Activated CD4-positive, alpha-beta T cell treated with anti-CD3 and anti-CD28 coated beads, Interleukin-2, amount 10 ng/mL, durations not matched to agents 24 days and 14 days (primary cell): ENCODE measurements at regions of chr5 and their contacts with region 1.

Region 1: GRCh38 chr5:7856855-7857254 is 5.9 kb upstream of the CFAP90 start:
- DNase-seq: peak; percentile 83
- H3K4me3 Mint-ChIP-seq: no peak overlapping the region
- H3K27ac Mint-ChIP-seq: peak overlapping the region; percentile 50
- H3K4me1 Mint-ChIP-seq: peaks cover 30% of the 10 kb centered on the region
- H3K27me3 Mint-ChIP-seq: peaks cover 10% of the 10 kb centered on the region

Region 2: DNA sequence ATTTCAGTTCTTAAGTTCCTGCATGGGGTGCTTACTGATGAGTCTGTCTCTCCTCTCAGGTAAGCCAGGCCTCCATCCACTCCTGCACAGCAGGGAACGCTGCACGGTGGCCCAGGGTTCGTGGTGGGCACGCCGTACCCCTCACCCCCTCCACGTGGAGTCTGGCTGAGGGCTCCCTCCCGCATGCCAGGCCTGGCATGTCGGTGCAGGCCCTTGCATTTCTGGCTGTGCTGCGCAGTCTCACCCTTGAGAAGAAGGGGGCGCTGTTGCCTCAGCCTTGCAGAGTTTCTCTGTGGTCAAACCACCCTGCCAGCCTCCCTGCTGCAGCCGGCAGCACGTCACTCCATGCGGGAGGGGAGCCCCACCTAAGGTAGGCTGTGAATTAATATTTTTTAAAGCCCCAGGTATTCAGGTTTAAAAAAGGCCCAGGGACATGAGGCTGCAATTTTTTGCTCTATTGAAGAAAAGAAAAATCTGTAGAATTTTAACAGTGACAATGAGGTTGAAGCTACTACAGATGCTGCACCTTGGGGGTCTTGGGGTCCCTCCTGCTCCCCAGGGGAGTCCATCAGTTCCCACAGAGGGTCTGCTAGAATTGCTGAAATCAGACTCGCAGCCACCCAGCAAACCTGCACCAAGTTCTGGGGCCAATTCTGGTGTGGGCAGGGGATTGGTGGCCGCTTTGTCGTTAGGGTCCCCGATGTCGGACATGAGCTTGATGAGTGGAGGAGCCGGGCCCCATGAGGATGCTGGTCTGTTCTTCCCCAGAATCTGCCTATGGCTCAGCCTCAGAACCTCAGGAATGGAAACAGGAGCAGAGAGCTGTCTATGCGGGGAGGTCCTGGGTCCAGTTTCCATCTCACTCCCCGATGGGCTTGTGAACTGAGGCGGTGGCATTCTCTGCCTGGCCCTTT is 1091.0 kb before region 1 on chr5:
- intact Hi-C with region 1: loop called (anchors 10 kb)
- DNase-seq: peak; percentile 93
- H3K4me3 Mint-ChIP-seq: no peak overlapping the region
- H3K27ac Mint-ChIP-seq: peak overlapping the region; percentile 25
- H3K4me1 Mint-ChIP-seq: peaks cover 5% of the 10 kb centered on the region
- H3K27me3 Mint-ChIP-seq: no peaks in the 10 kb centered on the region

Region 3: GRCh38 chr5:7868773-7869473 is 12.1 kb after region 1 on chr5 and contains the starts of genes FASTKD3 and MTRR:
- intact Hi-C with region 1: loop called (anchors 1 kb)
- DNase-seq: peak; percentile 97
- H3K4me3 Mint-ChIP-seq: peak within 1 kb of the TSS; percentile 99
- H3K27ac Mint-ChIP-seq: peak within 1 kb of the TSS; percentile 92
- H3K4me1 Mint-ChIP-seq: peaks cover 64% of the 10 kb centered on the region
- H3K27me3 Mint-ChIP-seq: no peaks in the 10 kb centered on the region
- total RNA-seq, gene FASTKD3: 17.7 and 18.3 TPM in 2 replicates
- total RNA-seq, gene MTRR: 64.4 and 76.8 TPM in 2 replicates

Region 4: DNA sequence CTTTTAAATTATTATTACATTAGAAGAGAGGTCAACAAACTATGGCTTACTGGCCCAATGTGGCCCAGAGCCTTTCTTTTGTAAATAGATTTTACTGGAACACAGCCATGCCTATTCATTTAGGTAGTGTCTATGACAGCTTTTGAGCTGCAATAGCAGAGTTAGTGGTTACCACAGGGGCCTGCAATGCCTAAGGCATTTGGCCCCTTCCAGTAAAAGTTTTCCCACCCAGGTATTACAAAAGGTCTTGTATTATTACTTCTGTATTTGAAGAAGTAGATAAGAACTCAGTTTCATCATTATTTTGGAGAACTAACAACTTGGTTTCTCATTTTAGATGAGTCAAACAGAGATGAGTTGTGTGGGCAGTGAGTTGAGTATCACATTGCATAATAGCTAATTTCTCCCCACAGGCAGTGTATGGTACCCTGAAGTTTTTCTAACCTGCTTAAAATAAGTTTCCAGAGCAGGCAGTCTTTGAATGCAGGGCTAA is 21.6 kb after region 1 on chr5:
- intact Hi-C with region 1: loop called (anchors 1 kb)
- DNase-seq: no peak
- H3K4me3 Mint-ChIP-seq: peak overlapping the region; percentile 41
- H3K27ac Mint-ChIP-seq: peak overlapping the region; percentile 72
- H3K4me1 Mint-ChIP-seq: peaks cover 40% of the 10 kb centered on the region
- H3K27me3 Mint-ChIP-seq: no peaks in the 10 kb centered on the region

Region 5: DNA sequence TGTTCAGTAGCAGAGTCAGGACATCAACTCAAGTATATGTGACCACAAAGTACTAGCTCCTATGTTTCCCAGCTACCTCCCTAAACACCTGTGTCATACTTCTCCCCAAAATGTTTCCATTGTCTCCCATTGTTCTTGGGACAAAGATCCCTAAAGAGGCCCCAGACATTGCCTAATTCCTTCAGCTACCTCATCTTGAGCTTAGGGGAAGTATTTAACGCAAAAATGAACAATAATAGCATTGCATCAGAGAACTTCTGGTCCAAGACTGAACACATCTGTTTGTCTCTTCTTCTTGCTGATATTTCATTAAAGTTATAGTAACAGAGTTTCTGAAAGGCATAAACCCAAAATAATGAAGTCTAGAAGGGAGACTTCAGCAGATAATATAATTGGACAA is 442.9 kb after region 1 on chr5:
- intact Hi-C with region 1: no loop called
- DNase-seq: no peak
- H3K4me3 Mint-ChIP-seq: no peak overlapping the region
- H3K27ac Mint-ChIP-seq: no peak overlapping the region
- H3K4me1 Mint-ChIP-seq: no peaks in the 10 kb centered on the region
- H3K27me3 Mint-ChIP-seq: no peaks in the 10 kb centered on the region